IMR-90 (cell line): ENCODE measurements at regions of chr6 and their contacts with region 1.

Region 1: GRCh38 chr6:112936079-112936871 is 589.1 kb downstream of the RFPL4B start:
- DNase-seq: peak; percentile 72
- ATAC-seq: peak; percentile 49; the same call in 1 of the 2 replicates
- H3K4me3 ChIP-seq: no peak overlapping the region
- H3K27ac ChIP-seq: no peak overlapping the region
- H3K4me1 ChIP-seq: peaks cover 4% of the 10 kb centered on the region
- H3K27me3 ChIP-seq: no peaks in the 10 kb centered on the region
- CTCF ChIP-seq: no peak
- POLR2A ChIP-seq: no peak
- RAD21 ChIP-seq: no peak

Region 2: DNA sequence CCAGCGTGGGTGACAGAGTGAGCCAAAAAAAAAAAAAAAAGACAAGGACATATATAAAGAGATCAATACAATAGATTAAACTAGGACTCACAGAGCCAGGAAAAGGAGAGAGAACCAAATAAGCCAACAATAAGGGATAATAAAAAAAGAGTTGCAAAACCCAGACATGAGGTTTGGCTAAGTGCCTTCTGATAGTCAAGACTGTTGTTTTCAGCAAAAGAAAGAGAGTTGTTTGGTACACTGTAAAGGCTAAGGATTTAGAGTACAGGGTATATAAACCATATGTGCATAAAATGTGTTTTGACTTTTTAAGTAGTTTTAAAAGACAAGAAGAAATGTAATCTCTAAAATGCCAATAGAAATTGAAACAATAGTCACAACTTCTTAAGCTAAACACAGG is 1911.6 kb before region 1 on chr6:
- CTCF ChIA-PET with region 1: no interaction called
- POLR2A ChIA-PET with region 1: interaction called, 17 read pairs
- dilution Hi-C with region 1: no loop called
- in situ Hi-C with region 1: no loop called
- intact Hi-C with region 1: no loop called
- DNase-seq: no peak
- ATAC-seq: no peak
- H3K4me3 ChIP-seq: no peak overlapping the region
- H3K27ac ChIP-seq: no peak overlapping the region
- H3K4me1 ChIP-seq: no peaks in the 10 kb centered on the region
- H3K27me3 ChIP-seq: no peaks in the 10 kb centered on the region
- CTCF ChIP-seq: no peak
- POLR2A ChIP-seq: no peak
- RAD21 ChIP-seq: no peak

Region 3: DNA sequence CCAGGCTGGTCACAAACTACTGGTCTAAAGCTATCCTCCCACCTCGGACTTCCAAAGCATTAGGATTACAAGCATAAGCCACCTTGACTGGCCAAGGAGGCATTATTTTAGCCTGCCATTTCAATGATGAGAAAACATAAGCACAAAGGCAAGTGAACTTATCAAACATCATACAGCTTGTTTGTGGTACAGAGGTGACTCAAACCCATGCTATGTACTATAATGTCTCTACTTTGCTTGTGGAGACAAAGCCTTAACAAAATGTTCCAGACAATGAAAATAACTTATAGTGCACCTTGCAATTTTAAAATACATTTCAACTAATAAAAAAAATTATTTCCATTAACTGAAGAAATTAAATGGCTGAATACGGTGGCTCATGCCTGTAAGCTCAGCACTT is 1008.4 kb after region 1 on chr6:
- CTCF ChIA-PET with region 1: no interaction called
- POLR2A ChIA-PET with region 1: no interaction called
- dilution Hi-C with region 1: no loop called
- in situ Hi-C with region 1: no loop called
- intact Hi-C with region 1: no loop called
- DNase-seq: peak; percentile 64
- ATAC-seq: peak; percentile 53
- H3K4me3 ChIP-seq: no peak overlapping the region
- H3K27ac ChIP-seq: no peak overlapping the region
- H3K4me1 ChIP-seq: peaks cover 1% of the 10 kb centered on the region; the same call in 1 of the 2 replicates
- H3K27me3 ChIP-seq: no peaks in the 10 kb centered on the region
- CTCF ChIP-seq: no peak
- POLR2A ChIP-seq: no peak
- RAD21 ChIP-seq: no peak